ENCODE measurements at regions of chr17 and their contacts with region 1.

Region 1: DNA sequence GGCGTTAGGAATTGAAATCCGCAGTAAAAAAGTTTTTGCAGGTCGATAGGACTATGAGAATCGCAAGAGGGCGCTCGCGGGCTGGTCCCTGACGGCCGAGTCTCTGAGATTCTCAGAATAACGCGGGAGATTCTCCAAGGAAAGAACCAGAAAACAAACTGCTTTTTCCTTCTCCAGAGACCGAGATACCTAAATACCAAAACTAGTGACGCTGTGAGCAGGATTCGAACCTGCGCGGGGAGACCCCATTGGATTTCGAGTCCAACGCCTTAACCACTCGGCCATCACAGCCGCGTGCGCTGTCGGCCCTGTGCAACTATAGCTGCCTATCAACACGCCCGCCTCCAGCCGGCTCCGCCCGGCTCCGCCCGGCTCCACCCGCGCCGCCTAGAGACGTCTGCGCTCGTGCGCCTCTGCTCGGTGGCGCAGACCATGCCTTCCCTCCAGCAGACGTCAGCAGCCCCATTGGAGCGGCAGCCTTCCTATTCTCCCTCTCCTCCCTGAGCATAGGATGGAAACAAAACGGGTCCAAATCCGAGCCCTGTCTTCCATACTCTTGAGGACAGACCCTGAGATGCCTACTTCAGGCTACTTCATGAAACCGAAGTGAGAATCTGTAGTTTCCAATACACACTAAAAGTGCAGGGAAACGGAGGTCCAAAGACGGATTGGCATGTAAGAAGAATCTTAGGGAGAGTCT is 13.4 kb downstream of the PER1 start:
- DNase-seq: peak; percentile 93 to 99
- ATAC-seq: peak; percentile 86 to 94
- H3K4me3 ChIP-seq: peak overlapping the region; percentile 58
- H3K27ac ChIP-seq: peak overlapping the region; percentile 82 to 86
- H3K4me1 ChIP-seq: peaks cover 22% of the 10 kb centered on the region
- CTCF ChIP-seq: peak; percentile 98
- EP300 ChIP-seq: peak in 1 of 2 experiments; percentile 27; a peak in 1 of 5 replicates
- POLR2A ChIP-seq: peak; percentile 47; the same call in 1 of the 2 replicates
- RAD21 ChIP-seq: peak; percentile 90 to 93

Region 2: DNA sequence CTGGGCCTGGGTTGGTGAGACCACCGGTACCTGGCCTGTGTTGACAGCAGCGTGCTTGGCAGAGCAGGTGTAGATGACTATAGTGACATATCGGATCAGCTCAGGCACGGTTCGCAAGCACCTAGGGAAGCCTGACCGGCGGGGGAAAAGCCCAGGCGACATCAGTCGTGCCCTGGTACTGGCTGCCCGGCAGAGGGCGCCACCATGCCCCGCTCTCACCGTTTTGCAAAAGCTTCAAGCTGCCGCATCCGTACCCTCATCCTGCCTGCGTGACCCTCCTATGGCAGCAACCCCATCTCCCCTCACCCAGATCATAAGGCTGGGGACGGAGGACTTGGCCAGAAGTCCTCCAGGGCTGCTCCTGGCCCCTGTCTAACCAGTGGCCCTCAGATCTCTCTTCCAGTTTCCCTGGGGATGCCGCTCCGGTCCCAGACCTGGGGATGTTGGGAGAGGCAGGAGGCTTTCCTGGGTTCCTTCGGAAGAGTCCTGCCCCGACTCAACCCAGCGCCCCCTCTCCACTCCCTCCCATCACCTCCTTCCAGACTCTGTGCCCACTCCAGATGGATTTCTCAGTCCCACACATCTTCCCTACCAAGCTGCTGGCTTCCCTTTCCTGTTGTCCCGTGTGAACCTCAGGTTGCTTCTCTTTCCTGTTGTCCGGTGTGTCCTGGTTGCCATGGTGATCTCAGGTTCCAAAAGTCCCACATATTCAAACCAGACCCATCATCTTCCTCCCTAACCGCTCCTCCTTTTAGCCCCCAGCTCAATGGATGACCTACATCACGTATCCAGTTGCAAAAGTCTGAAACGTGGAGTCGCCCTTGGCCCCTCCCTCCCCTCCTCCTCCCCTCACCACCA is 65.0 kb before region 1 on chr17:
- CTCF ChIA-PET with region 1: interaction called, 10 read pairs
- POLR2A ChIA-PET with region 1: no interaction called
- DNase-seq: peak; percentile 84 to 91
- ATAC-seq: peak; percentile 75 to 92
- H3K4me3 ChIP-seq: peak overlapping the region; percentile 34
- H3K27ac ChIP-seq: peak overlapping the region in 1 of 2 experiments; percentile 27; a peak in 2 of 6 replicates
- H3K4me1 ChIP-seq: peaks cover 15% of the 10 kb centered on the region
- CTCF ChIP-seq: peak; percentile 97
- EP300 ChIP-seq: no peak
- POLR2A ChIP-seq: no peak
- RAD21 ChIP-seq: peak; percentile 35 to 42; a peak in 2 of 5 replicates

Region 3: DNA sequence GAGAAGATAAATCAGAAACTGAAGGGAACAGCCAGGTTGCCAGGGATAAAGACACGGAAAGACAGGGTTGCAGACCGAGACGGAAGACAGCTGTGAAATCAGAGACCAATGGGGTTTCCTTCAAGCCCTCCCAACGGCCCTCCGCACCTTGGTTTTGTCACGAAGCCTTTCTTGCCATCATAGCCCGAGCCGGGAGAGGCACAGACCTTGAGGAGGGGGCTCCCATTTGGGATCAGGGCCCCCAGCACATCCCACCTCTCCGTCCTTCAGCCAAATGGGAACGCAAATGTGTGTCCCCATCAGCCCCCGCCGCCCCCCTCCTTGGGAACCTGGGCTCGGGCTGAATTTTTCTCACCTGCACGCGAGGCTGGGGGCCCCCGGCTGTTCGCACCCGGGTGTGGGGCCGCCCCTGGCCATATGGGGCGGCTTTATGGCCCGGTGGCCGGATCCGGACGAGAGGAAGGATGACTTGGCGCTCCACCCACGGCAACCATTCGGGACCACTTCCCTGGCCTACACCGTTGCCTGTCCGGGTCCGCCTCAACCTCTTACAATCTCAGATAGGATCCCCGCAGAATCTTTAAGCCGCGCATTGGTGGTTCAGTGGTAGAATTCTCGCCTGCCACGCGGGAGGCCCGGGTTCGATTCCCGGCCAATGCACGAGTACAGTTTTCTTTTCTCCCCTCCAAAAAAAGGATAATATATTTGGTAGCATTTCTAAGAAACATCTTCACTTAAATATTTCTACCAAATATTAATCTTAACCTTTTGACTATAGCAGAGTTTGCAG is 13.5 kb before region 1 on chr17:
- CTCF ChIA-PET with region 1: interaction called, 601 read pairs
- POLR2A ChIA-PET with region 1: interaction called, 8 read pairs
- DNase-seq: peak; percentile 81 to 84
- ATAC-seq: peak in 1 of 2 experiments; percentile 18; a peak in 3 of 6 replicates
- H3K4me3 ChIP-seq: peak overlapping the region; percentile 56
- H3K27ac ChIP-seq: peak overlapping the region; percentile 73 to 86
- H3K4me1 ChIP-seq: peaks cover 19% of the 10 kb centered on the region
- CTCF ChIP-seq: no peak
- EP300 ChIP-seq: no peak; a peak in 1 of 5 replicates
- POLR2A ChIP-seq: no peak
- RAD21 ChIP-seq: 0 out of 5 replicates have a peak, but pooled peaks of 1 of the 2 experiments have one; percentile 5

Region 4: GRCh38 chr17:8151123-8151640 is 12.4 kb after region 1 on chr17:
- CTCF ChIA-PET with region 1: interaction called, 601 read pairs
- POLR2A ChIA-PET with region 1: interaction called, 18 read pairs
- DNase-seq: no peak
- ATAC-seq: no peak
- H3K4me3 ChIP-seq: peak overlapping the region; percentile 49; the same call in 2 of the 3 replicates
- H3K27ac ChIP-seq: peak overlapping the region; percentile 89 to 93; a peak in 3 of 6 replicates
- H3K4me1 ChIP-seq: peaks cover 42% of the 10 kb centered on the region
- CTCF ChIP-seq: no peak
- EP300 ChIP-seq: no peak
- POLR2A ChIP-seq: no peak
- RAD21 ChIP-seq: no peak

Region 5: GRCh38 chr17:8156246-8156992 is 17.6 kb after region 1 on chr17:
- CTCF ChIA-PET with region 1: interaction called, 601 read pairs
- POLR2A ChIA-PET with region 1: interaction called, 18 read pairs
- DNase-seq: peak; percentile 100
- ATAC-seq: peak; percentile 57 to 73
- H3K4me3 ChIP-seq: peak overlapping the region; percentile 65
- H3K27ac ChIP-seq: peak overlapping the region; percentile 89 to 93
- H3K4me1 ChIP-seq: peaks cover 55% of the 10 kb centered on the region
- CTCF ChIP-seq: no peak
- EP300 ChIP-seq: no peak
- POLR2A ChIP-seq: peak; percentile 54
- RAD21 ChIP-seq: peak; percentile 33 to 40; a peak in 2 of 5 replicates

Region 6: DNA sequence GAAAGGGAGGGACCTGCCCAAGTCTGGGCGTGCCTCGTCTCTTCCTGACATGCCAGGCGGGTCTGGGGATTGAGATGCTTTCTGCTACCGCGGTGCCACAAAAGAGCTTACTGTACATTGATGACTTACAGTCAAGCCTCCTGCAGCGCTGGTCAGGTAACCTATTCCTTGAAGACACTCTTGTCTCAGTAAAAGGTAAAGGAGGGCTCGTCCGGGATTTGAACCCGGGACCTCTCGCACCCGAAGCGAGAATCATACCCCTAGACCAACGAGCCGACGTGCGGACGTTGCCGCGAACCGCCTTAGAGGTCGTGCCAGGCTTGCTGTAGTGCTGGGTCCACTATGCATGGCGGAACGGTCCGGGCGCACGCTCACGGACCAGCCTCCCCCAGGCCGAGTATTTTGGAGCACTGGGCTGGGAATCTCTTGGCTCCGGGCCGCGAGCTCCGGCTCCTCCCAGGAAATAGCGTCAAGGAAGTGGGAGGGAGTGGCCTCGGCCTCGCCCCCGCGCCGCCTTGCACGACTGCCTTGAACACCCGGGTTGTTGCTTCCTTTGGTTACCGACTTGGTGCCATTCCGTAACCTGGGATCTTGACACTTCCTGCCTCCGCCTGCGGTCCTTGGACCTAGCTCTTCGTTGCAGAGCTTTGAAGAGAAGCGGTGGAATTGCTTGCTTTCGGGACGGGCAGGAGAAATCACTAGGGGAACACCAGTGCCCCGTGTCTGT is 84.0 kb after region 1 on chr17:
- CTCF ChIA-PET with region 1: interaction called, 11 read pairs
- POLR2A ChIA-PET with region 1: interaction called, 3 read pairs
- DNase-seq: peak; percentile 85 to 98
- ATAC-seq: peak; percentile 38 to 64
- H3K4me3 ChIP-seq: peak overlapping the region; percentile 78
- H3K27ac ChIP-seq: peak overlapping the region; percentile 95 to 97
- H3K4me1 ChIP-seq: peaks cover 32% of the 10 kb centered on the region
- CTCF ChIP-seq: no peak
- EP300 ChIP-seq: no peak
- POLR2A ChIP-seq: peak; percentile 85
- RAD21 ChIP-seq: no peak

Region 7: GRCh38 chr17:8397203-8398045 is 258.6 kb after region 1 on chr17 and contains the start of gene RNF222:
- CTCF ChIA-PET with region 1: no interaction called
- POLR2A ChIA-PET with region 1: no interaction called
- DNase-seq: no peak
- ATAC-seq: peak in 1 of 2 experiments; percentile 5; a peak in 1 of 6 replicates
- H3K4me3 ChIP-seq: no peak within 1 kb of the TSS
- H3K27ac ChIP-seq: no peak within 1 kb of the TSS
- H3K4me1 ChIP-seq: no peaks in the 10 kb centered on the region
- CTCF ChIP-seq: no peak
- EP300 ChIP-seq: no peak
- POLR2A ChIP-seq: no peak
- RAD21 ChIP-seq: no peak
- polyA plus RNA-seq, gene RNF222: not detected in 2 replicates